Activated naive CD4-positive, alpha-beta T cell treated with anti-CD3 and anti-CD28 coated beads for 36 hours (primary cell): ENCODE measurements at regions of chr1 and their contacts with region 1.

Region 1: GRCh38 chr1:149962123-149962548 is 25.5 kb upstream of the MTMR11 start:
- DNase-seq: peak; percentile 63
- H3K4me3 Mint-ChIP-seq: no peak overlapping the region
- H3K27ac Mint-ChIP-seq: no peak overlapping the region
- H3K4me1 Mint-ChIP-seq: peaks cover 12% of the 10 kb centered on the region
- H3K27me3 Mint-ChIP-seq: no peaks in the 10 kb centered on the region

Region 2: DNA sequence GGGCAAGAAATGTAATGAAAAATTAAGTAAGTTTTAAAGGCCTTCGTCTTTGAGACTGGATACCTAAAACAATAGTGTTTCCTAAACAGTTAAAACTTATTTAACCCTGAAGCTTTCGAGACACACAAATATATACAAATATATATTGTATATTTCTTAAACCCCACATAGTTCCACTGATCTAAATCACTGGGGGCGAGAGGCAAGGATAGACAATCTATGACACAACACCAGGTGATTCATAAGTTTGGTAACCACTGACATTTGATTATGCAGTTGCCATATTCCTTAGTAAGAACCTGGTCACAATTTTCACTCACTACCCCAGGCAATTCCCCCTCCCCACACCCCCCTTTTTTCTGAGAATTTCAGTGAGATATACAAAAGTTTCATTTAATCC is 118.0 kb before region 1 on chr1:
- CTCF ChIA-PET with region 1: no interaction called
- intact Hi-C with region 1: no loop called
- DNase-seq: peak; percentile 44
- H3K4me3 Mint-ChIP-seq: peak overlapping the region; percentile 88
- H3K27ac Mint-ChIP-seq: peak overlapping the region; percentile 87
- H3K4me1 Mint-ChIP-seq: peaks cover 42% of the 10 kb centered on the region
- H3K27me3 Mint-ChIP-seq: no peaks in the 10 kb centered on the region

Region 3: GRCh38 chr1:149917571-149918144 is 44.5 kb before region 1 on chr1 and contains the start of gene SV2A:
- CTCF ChIA-PET with region 1: no interaction called
- intact Hi-C with region 1: no loop called
- DNase-seq: peak; percentile 72
- H3K4me3 Mint-ChIP-seq: peak within 1 kb of the TSS; percentile 86
- H3K27ac Mint-ChIP-seq: no peak within 1 kb of the TSS
- H3K4me1 Mint-ChIP-seq: peaks cover 34% of the 10 kb centered on the region
- H3K27me3 Mint-ChIP-seq: no peaks in the 10 kb centered on the region
- total RNA-seq, gene SV2A: 8.2 to 8.6 TPM

Region 4: DNA sequence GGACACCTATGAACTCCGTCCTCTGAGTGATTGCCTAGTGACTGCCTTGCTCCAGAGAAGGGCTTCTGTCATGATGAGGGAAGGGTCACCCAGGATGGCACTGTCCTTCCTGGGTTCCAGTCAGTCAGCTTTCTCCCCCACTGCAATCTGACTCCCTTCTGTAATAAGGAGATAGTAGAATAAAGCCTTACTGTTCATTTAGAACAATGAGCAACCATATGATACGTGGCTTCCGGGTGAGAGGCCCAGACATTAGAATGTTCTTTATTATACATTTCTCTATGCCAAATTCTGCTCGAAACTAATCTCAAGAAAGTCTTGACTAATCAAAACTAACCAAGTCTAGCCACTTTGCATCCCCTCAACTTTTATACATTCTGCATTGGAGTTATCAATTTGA is 16.9 kb before region 1 on chr1:
- CTCF ChIA-PET with region 1: no interaction called
- intact Hi-C with region 1: no loop called
- DNase-seq: no peak
- H3K4me3 Mint-ChIP-seq: no peak overlapping the region
- H3K27ac Mint-ChIP-seq: no peak overlapping the region
- H3K4me1 Mint-ChIP-seq: peaks cover 4% of the 10 kb centered on the region
- H3K27me3 Mint-ChIP-seq: no peaks in the 10 kb centered on the region

Region 5: GRCh38 chr1:150034336-150034735 is 72.2 kb after region 1 on chr1:
- CTCF ChIA-PET with region 1: interaction called, 11 read pairs
- intact Hi-C with region 1: no loop called
- DNase-seq: no peak
- H3K4me3 Mint-ChIP-seq: no peak overlapping the region
- H3K27ac Mint-ChIP-seq: no peak overlapping the region
- H3K4me1 Mint-ChIP-seq: no peaks in the 10 kb centered on the region
- H3K27me3 Mint-ChIP-seq: peaks cover 2% of the 10 kb centered on the region

Region 6: DNA sequence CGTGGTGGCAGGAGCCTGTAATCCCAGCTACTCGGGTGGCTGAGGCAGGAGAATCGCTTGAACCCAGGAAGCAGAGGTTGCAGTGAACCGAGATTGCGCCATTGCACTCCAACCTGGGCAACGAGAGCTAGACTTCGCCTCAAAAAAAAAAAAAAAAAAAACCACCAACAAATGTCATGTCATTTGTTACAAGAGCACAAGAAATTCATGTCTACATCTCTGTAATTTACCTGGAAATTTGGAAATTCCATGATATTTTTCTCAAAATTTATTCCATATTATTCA is 88.9 kb after region 1 on chr1:
- CTCF ChIA-PET with region 1: interaction called, 25 read pairs
- intact Hi-C with region 1: loop called (anchors 1 kb)
- DNase-seq: no peak
- H3K4me3 Mint-ChIP-seq: no peak overlapping the region
- H3K27ac Mint-ChIP-seq: no peak overlapping the region
- H3K4me1 Mint-ChIP-seq: peaks cover 2% of the 10 kb centered on the region
- H3K27me3 Mint-ChIP-seq: no peaks in the 10 kb centered on the region

Region 7: DNA sequence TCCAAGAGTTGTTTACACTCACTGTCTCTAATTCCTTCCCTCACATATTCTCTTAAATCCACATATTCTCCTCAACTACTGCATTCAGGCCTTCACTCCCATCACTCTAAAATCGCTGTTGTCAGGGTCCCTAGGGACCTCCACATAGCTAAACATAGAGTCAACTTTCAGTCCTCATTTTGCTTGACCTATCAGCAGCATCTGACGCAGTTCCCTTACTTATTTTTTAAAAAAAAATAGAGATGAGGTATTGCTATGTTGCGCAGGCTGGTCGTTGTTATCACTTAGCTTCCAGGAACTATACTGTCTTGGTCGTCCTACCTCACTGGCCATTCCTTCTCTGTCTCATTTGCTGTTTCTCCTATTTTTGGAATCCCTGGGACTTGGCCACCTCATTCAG is 175.9 kb after region 1 on chr1:
- CTCF ChIA-PET with region 1: no interaction called
- intact Hi-C with region 1: no loop called
- DNase-seq: no peak
- H3K4me3 Mint-ChIP-seq: no peak overlapping the region
- H3K27ac Mint-ChIP-seq: no peak overlapping the region
- H3K4me1 Mint-ChIP-seq: peaks cover 3% of the 10 kb centered on the region
- H3K27me3 Mint-ChIP-seq: no peaks in the 10 kb centered on the region